Activated CD4-positive, alpha-beta memory T cell treated with anti-CD3 and anti-CD28 coated beads for 36 hours (primary cell): ENCODE measurements at regions of chr4 and their contacts with region 1.

Region 1: GRCh38 chr4:105215609-105216313 is 69.1 kb downstream of the TET2 start:
- DNase-seq: no peak
- H3K4me3 Mint-ChIP-seq: peak overlapping the region; percentile 14
- H3K27ac Mint-ChIP-seq: peak overlapping the region; percentile 65
- H3K4me1 Mint-ChIP-seq: peaks cover 42% of the 10 kb centered on the region
- H3K27me3 Mint-ChIP-seq: no peaks in the 10 kb centered on the region

Region 2: GRCh38 chr4:105158837-105159236 is 56.9 kb before region 1 on chr4:
- CTCF ChIA-PET with region 1: no interaction called
- POLR2A ChIA-PET with region 1: no interaction called
- intact Hi-C with region 1: no loop called
- DNase-seq: no peak
- H3K4me3 Mint-ChIP-seq: no peak overlapping the region
- H3K27ac Mint-ChIP-seq: no peak overlapping the region
- H3K4me1 Mint-ChIP-seq: peaks cover 32% of the 10 kb centered on the region
- H3K27me3 Mint-ChIP-seq: no peaks in the 10 kb centered on the region

Region 3: DNA sequence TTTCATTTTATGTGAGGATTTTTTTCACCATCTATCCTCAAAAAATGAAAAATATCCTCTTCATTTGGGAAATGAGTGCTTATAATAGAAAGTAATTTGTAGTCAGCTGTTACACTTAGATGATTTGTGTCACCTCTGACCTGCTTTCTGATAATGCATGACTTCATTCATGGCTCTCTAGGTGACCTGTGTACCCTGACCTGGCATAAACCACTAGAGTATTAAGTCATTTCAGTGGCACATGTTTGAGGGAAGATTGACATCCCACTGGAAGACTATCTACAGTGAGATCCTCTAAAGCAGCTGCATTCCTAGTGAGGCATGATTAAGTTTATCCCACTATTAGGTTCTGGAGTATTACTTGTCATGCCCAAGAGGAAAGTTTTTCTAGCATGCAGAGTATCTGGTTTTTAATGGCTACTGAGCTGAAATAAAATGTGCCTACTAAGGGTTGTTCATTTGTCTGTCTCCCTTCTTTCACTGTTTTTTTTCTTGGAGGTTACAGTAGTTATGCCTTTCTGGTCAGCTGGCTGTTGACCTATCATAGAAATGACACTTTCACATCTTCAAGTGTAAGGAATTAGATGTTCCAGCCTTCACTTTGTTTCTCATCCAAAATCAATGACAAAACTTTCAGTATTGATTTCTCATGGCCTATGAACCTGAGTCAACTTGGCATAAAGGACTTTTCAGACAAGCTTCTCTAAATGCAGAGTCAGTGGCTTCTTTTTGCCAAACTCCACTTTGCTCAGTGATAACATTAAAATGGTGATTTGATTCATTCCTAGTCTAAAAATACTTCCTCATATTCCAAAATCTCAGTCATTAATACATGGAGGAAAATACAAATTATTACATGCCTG is 36.0 kb before region 1 on chr4:
- CTCF ChIA-PET with region 1: no interaction called
- POLR2A ChIA-PET with region 1: no interaction called
- intact Hi-C with region 1: loop called (anchors 5 kb)
- DNase-seq: no peak
- H3K4me3 Mint-ChIP-seq: no peak overlapping the region
- H3K27ac Mint-ChIP-seq: no peak overlapping the region
- H3K4me1 Mint-ChIP-seq: peaks cover 44% of the 10 kb centered on the region
- H3K27me3 Mint-ChIP-seq: no peaks in the 10 kb centered on the region

Region 4: GRCh38 chr4:105191621-105192210 is 24.0 kb before region 1 on chr4:
- CTCF ChIA-PET with region 1: interaction called, 3 read pairs
- POLR2A ChIA-PET with region 1: no interaction called
- intact Hi-C with region 1: loop called (anchors 1 kb)
- DNase-seq: no peak
- H3K4me3 Mint-ChIP-seq: no peak overlapping the region
- H3K27ac Mint-ChIP-seq: peak overlapping the region; percentile 83
- H3K4me1 Mint-ChIP-seq: peaks cover 87% of the 10 kb centered on the region
- H3K27me3 Mint-ChIP-seq: no peaks in the 10 kb centered on the region

Region 5: DNA sequence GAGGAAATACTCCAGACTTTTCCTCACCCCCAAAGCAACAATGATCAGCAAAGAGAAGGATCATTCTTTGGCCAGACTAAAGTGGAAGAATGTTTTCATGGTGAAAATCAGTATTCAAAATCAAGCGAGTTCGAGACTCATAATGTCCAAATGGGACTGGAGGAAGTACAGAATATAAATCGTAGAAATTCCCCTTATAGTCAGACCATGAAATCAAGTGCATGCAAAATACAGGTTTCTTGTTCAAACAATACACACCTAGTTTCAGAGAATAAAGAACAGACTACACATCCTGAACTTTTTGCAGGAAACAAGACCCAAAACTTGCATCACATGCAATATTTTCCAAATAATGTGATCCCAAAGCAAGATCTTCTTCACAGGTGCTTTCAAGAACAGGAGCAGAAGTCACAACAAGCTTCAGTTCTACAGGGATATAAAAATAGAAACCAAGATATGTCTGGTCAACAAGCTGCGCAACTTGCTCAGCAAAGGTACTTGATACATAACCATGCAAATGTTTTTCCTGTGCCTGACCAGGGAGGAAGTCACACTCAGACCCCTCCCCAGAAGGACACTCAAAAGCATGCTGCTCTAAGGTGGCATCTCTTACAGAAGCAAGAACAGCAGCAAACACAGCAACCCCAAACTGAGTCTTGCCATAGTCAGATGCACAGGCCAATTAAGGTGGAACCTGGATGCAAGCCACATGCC is 20.6 kb after region 1 on chr4:
- CTCF ChIA-PET with region 1: no interaction called
- POLR2A ChIA-PET with region 1: no interaction called
- intact Hi-C with region 1: no loop called
- DNase-seq: no peak
- H3K4me3 Mint-ChIP-seq: no peak overlapping the region
- H3K27ac Mint-ChIP-seq: no peak overlapping the region
- H3K4me1 Mint-ChIP-seq: peaks cover 8% of the 10 kb centered on the region
- H3K27me3 Mint-ChIP-seq: no peaks in the 10 kb centered on the region

Region 6: GRCh38 chr4:105257826-105258495 is 42.2 kb after region 1 on chr4:
- CTCF ChIA-PET with region 1: no interaction called
- POLR2A ChIA-PET with region 1: no interaction called
- intact Hi-C with region 1: no loop called
- DNase-seq: no peak
- H3K4me3 Mint-ChIP-seq: no peak overlapping the region
- H3K27ac Mint-ChIP-seq: no peak overlapping the region
- H3K4me1 Mint-ChIP-seq: no peaks in the 10 kb centered on the region
- H3K27me3 Mint-ChIP-seq: no peaks in the 10 kb centered on the region

Region 7: GRCh38 chr4:105274504-105274903 is 58.7 kb after region 1 on chr4:
- CTCF ChIA-PET with region 1: no interaction called
- POLR2A ChIA-PET with region 1: no interaction called
- intact Hi-C with region 1: loop called (anchors 5 kb)
- DNase-seq: no peak
- H3K4me3 Mint-ChIP-seq: no peak overlapping the region
- H3K27ac Mint-ChIP-seq: peak overlapping the region; percentile 57
- H3K4me1 Mint-ChIP-seq: peaks cover 46% of the 10 kb centered on the region
- H3K27me3 Mint-ChIP-seq: no peaks in the 10 kb centered on the region

Region 8: GRCh38 chr4:105453550-105454205 is 237.9 kb after region 1 on chr4:
- CTCF ChIA-PET with region 1: no interaction called
- POLR2A ChIA-PET with region 1: no interaction called
- intact Hi-C with region 1: loop called (anchors 2 kb)
- DNase-seq: peak; percentile 51
- H3K4me3 Mint-ChIP-seq: no peak overlapping the region
- H3K27ac Mint-ChIP-seq: peak overlapping the region; percentile 69
- H3K4me1 Mint-ChIP-seq: peaks cover 38% of the 10 kb centered on the region
- H3K27me3 Mint-ChIP-seq: no peaks in the 10 kb centered on the region

Region 9: GRCh38 chr4:105708530-105709391 is 493.0 kb after region 1 on chr4 and contains the starts of genes GSTCD and INTS12:
- CTCF ChIA-PET with region 1: no interaction called
- POLR2A ChIA-PET with region 1: no interaction called
- intact Hi-C with region 1: loop called (anchors 10 kb)
- DNase-seq: peak; percentile 93
- H3K4me3 Mint-ChIP-seq: peak within 1 kb of the TSS; percentile 98
- H3K27ac Mint-ChIP-seq: peak within 1 kb of the TSS; percentile 86
- H3K4me1 Mint-ChIP-seq: peaks cover 27% of the 10 kb centered on the region
- H3K27me3 Mint-ChIP-seq: no peaks in the 10 kb centered on the region
- total RNA-seq, gene GSTCD: 15.2 to 16.7 TPM
- total RNA-seq, gene INTS12: 19.6 to 22.7 TPM